Posterior vena cava (tissue), 2 donors: ENCODE measurements at regions of chr5 and their contacts with region 1.

Region 1: DNA sequence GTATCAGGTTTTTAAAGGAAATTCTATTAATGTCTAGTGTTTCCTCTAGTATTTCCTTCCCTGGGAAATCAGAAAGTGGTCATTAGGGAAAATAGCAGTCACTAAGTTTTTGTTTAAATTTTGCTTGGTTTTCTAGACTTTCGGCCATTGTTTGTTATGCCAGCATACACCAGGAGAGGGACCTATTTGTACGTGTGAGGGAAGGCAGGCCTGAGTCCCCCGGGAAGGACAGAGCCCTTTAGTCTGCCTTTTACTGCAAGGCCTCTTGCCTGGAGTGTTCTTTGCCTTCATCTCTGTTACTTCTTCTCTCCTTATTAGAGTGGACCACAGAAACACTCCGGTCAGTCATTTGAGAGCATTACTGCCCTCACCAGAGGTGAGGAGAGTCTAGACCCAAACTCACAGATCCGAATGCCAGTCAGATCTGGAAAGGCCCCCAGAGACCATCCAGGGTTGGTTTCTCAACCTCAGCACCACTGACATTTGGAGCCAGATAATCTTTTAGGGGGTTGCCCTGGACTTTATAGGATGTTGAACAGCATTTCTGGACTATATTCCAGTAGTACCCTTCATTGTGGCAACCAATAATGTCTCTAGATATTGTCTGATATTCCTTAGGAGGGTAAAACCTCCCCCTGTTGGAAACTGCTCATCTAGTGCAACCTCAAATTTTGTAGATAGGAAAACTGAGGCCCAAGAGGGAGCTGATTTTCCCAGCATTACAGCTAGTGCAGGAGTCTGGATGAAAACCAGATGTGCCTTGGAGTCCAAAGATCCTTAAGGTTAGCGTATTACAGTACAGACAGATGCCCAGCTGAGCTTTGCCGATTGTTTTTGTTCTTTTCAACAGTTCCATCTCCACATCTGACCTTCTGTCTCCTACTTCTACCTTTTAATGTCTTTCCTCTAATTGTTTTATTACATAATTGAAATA is 93.0 kb upstream of the NIPAL4 start:
- DNase-seq: no peak

Region 2: GRCh38 chr5:157324237-157324636 is 42.8 kb before region 1 on chr5:
- intact Hi-C with region 1: no loop called
- DNase-seq: no peak

Region 3: DNA sequence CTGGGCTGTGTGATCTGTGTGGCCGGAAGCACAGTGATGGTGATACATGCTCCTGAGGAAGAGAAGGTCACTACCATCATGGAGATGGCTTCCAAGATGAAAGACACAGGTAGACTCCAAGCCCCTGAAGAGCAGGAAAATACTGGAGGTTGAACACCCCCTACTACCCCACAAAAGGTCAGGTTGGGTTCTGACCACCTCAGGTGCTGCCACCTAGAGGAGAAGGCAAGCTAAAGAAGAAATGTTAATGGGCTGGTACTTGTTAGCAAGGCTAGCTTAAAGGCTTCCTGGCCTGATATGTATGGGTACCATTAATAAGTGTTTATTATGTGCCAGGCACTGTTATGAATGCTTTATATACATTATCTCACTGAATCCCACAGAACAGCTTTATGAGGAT is 104.7 kb after region 1 on chr5:
- intact Hi-C with region 1: loop called (anchors 5 kb)
- DNase-seq: no peak

Region 4: GRCh38 chr5:157476702-157477408 is 109.8 kb after region 1 on chr5:
- intact Hi-C with region 1: loop called (anchors 5 kb)
- DNase-seq: no peak

Region 5: GRCh38 chr5:157718519-157718918 is 351.5 kb after region 1 on chr5:
- intact Hi-C with region 1: loop called in 1 of 2 experiments (anchors 10 kb)
- DNase-seq: no peak